SK-N-SH (cell line): ENCODE measurements at regions of chr17 and their contacts with region 1.

Region 1: DNA sequence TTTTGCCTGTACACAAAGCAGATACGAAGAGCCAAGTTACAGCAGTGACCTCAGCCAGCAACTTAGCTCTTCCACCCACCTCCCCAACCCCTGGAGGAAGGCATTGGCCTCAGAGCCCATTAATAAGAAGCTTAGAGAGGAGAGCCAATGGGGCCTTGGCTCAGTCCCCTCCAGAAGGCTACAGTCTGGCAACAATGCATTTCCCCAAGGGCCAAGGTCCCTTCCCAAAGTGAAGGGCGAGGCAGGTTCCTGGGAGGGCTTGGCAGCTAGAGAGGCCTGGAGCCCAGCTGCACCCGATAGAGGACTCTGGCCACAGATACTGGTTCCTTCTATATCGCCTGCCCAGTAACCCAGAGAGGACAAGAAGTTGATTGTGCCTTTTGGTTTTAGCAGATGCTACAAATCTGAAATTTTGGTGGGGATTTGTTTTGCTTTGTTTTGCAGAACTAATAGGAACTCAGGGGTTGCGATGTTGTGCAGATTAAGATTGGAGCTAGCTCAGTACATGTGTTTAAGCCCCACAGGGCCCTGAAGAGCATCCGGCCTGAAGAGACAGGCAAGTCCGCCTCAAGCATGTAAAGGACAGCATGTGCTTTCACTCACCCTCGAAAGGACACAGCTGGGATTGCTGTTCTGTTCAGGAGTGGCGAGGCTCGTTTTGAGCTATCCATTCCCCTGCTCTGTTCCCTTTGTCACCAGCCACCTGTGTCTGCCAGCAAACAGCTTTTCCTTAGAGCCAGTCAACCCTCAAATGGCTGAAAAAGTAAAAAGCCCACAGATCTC is 12.0 kb upstream of the PNPO start:
- DNase-seq: no peak
- H3K4me3 ChIP-seq: no peak overlapping the region
- H3K27ac ChIP-seq: no peak overlapping the region
- H3K4me1 ChIP-seq: no peaks in the 10 kb centered on the region
- H3K27me3 ChIP-seq: no peaks in the 10 kb centered on the region
- CTCF ChIP-seq: no peak
- EP300 ChIP-seq: no peak
- RAD21 ChIP-seq: no peak

Region 2: GRCh38 chr17:47915776-47916398 is 13.5 kb before region 1 on chr17:
- CTCF ChIA-PET with region 1: interaction called, 13 read pairs
- POLR2A ChIA-PET with region 1: no interaction called
- DNase-seq: no peak
- H3K4me3 ChIP-seq: no peak overlapping the region
- H3K27ac ChIP-seq: no peak overlapping the region
- H3K4me1 ChIP-seq: no peaks in the 10 kb centered on the region
- H3K27me3 ChIP-seq: no peaks in the 10 kb centered on the region
- CTCF ChIP-seq: no peak
- EP300 ChIP-seq: no peak
- RAD21 ChIP-seq: no peak